ENCODE measurements at regions of chr3 and their contacts with region 1.

Region 1: GRCh38 chr3:73707772-73708171 is 83.0 kb upstream of the PDZRN3 start:
- DNase-seq: no peak
- ATAC-seq: no peak
- H3K4me3 ChIP-seq: no peak overlapping the region
- H3K27ac ChIP-seq: no peak overlapping the region
- H3K4me1 ChIP-seq: no peaks in the 10 kb centered on the region
- H3K27me3 ChIP-seq: no peaks in the 10 kb centered on the region
- CTCF ChIP-seq: no peak
- POLR2A ChIP-seq: no peak

Region 2: DNA sequence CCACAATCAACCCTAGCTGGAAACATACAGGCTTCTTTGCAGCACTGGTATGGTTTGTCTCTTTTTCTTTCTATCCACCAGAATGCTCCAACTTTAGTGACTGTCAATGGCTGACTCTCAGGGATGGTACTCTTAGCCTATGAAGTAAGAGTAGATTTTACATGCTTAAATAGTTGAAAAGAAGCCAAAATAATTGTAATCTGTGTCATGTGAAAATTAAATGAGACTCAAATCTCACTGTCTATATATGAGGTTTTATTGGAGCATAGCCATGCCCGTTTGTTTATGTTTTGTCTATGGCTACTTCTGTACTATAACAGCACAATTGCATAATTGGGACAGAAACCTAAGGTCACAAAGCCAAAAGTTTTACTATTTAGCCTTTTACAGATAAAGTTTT is 53.9 kb before region 1 on chr3:
- intact Hi-C with region 1: loop called in 1 of 10 experiments (anchors 2 kb)
- DNase-seq: no peak
- ATAC-seq: no peak
- H3K4me3 ChIP-seq: no peak overlapping the region
- H3K27ac ChIP-seq: peak overlapping the region in 1 of 12 donors; percentile 26
- H3K4me1 ChIP-seq: peaks cover 0 to 5% (median 0%) of the 10 kb centered on the region in 12 donors
- H3K27me3 ChIP-seq: no peaks in the 10 kb centered on the region
- CTCF ChIP-seq: no peak
- POLR2A ChIP-seq: no peak

Measured in heart left ventricle (tissue), 16 donors.